PC-3 (cell line): ENCODE measurements at regions of chr14 and their contacts with region 1.

Region 1: GRCh38 chr14:20413045-20413799 is at the start of gene TEP1:
- DNase-seq: peak; percentile 87
- ATAC-seq: peak; percentile 86
- H3K4me3 ChIP-seq: peak within 1 kb of the TSS; percentile 98
- H3K27ac ChIP-seq: peak within 1 kb of the TSS; percentile 93
- H3K4me1 ChIP-seq: peaks cover 32% of the 10 kb centered on the region
- H3K27me3 ChIP-seq: no peaks in the 10 kb centered on the region
- CTCF ChIP-seq: no peak
- total RNA-seq, gene TEP1: 8.9 and 11.7 TPM in 2 replicates

Region 2: GRCh38 chr14:20327005-20327869 is 86.0 kb before region 1 on chr14:
- CTCF ChIA-PET with region 1: no interaction called
- POLR2A ChIA-PET with region 1: no interaction called
- intact Hi-C with region 1: loop called (anchors 5 kb)
- DNase-seq: peak; percentile 81
- ATAC-seq: peak; percentile 45; the same call in 1 of the 2 replicates
- H3K4me3 ChIP-seq: no peak overlapping the region
- H3K27ac ChIP-seq: no peak overlapping the region
- H3K4me1 ChIP-seq: peaks cover 7% of the 10 kb centered on the region
- H3K27me3 ChIP-seq: no peaks in the 10 kb centered on the region
- CTCF ChIP-seq: peak; percentile 88

Region 3: DNA sequence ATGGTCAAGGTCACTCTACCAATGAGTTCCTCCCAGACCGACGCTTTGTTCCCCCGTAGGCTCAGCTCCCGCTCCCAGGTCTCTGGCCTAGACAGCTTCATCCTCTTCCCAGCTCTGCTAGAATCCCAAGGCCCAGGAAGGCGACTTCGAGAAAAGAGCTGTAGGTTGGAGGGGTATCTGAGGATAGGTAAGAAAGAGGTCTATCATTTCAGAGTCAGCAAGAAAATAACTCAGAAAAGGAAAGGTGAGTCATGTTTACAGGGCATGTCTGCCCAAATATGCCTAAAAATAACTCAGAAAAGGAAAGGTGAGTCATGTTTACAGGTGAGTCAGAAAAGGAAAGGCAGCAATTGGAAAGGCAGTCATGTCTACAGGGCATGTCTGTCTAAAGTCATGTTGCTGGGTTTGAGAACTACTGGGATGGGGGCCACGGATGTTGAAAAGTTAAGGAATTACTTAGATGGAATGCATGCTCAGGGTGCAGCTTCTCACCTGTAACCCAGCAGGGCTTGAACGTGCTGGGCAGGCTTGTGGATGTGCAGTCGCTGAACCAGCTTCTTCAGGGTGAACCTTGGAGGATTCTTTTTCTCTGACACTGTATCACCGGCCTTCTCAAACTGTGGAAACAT is 12.1 kb before region 1 on chr14:
- CTCF ChIA-PET with region 1: interaction called, 7 read pairs
- POLR2A ChIA-PET with region 1: no interaction called
- intact Hi-C with region 1: loop called (anchors 1 kb)
- DNase-seq: peak; percentile 98
- ATAC-seq: peak; percentile 97
- H3K4me3 ChIP-seq: peak overlapping the region; percentile 56
- H3K27ac ChIP-seq: peak overlapping the region; percentile 96
- H3K4me1 ChIP-seq: peaks cover 24% of the 10 kb centered on the region
- H3K27me3 ChIP-seq: no peaks in the 10 kb centered on the region
- CTCF ChIP-seq: no peak

Region 4: GRCh38 chr14:20454516-20455354 is 41.5 kb after region 1 on chr14 and contains the starts of genes APEX1 and OSGEP:
- CTCF ChIA-PET with region 1: interaction called, 11 read pairs
- POLR2A ChIA-PET with region 1: interaction called, 6 read pairs
- intact Hi-C with region 1: loop called (anchors 1 kb)
- DNase-seq: peak; percentile 99
- ATAC-seq: peak; percentile 86
- H3K4me3 ChIP-seq: peak within 1 kb of the TSS; percentile 82
- H3K27ac ChIP-seq: peak within 1 kb of the TSS; percentile 93
- H3K4me1 ChIP-seq: peaks cover 14% of the 10 kb centered on the region
- H3K27me3 ChIP-seq: no peaks in the 10 kb centered on the region
- CTCF ChIP-seq: no peak
- total RNA-seq, gene APEX1: 147 and 189 TPM in 2 replicates
- total RNA-seq, gene OSGEP: 57.7 and 64.1 TPM in 2 replicates

Region 5: DNA sequence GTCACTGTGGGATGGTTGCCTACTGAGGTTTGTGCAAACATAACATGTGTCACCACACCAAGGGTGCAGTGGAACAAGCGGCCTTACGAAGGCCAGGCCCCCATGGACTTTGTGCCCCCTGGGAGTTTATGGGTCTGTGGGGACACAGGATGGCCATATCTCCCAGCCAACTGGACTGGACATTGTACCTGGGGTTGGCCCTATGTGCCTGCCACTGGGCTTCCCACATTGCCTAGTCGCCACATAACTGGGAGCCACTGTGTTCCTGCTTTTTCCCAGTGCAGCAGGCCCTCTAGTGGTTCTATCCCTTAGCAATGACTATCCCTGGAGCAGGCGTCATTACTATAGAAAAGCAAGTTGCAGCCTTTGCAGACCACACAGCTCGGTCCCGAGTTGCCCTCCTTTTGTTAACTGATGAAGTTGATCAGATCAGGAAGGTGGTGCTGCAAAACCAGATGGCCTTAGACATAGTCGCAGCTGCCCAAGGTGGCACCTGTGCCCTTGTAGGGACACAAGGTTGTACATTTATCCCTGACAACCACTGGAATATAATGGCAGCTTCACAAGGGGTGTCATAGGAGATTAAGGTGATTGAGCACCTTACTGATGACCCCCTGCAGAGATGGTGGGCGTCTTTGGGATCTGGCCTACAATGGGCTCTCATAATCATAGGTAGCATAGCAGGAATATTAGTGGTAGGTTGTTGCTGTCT is 193.1 kb after region 1 on chr14:
- CTCF ChIA-PET with region 1: interaction called, 11 read pairs
- POLR2A ChIA-PET with region 1: no interaction called
- intact Hi-C with region 1: loop called (anchors 1 kb)
- DNase-seq: peak; percentile 72
- ATAC-seq: peak; percentile 37
- H3K4me3 ChIP-seq: no peak overlapping the region
- H3K27ac ChIP-seq: no peak overlapping the region
- H3K4me1 ChIP-seq: peaks cover 25% of the 10 kb centered on the region; the same call in 1 of the 2 replicates
- H3K27me3 ChIP-seq: no peaks in the 10 kb centered on the region
- CTCF ChIP-seq: peak; percentile 89